AG04450 (cell line): ENCODE measurements at regions of chr7 and their contacts with region 1.

Region 1: DNA sequence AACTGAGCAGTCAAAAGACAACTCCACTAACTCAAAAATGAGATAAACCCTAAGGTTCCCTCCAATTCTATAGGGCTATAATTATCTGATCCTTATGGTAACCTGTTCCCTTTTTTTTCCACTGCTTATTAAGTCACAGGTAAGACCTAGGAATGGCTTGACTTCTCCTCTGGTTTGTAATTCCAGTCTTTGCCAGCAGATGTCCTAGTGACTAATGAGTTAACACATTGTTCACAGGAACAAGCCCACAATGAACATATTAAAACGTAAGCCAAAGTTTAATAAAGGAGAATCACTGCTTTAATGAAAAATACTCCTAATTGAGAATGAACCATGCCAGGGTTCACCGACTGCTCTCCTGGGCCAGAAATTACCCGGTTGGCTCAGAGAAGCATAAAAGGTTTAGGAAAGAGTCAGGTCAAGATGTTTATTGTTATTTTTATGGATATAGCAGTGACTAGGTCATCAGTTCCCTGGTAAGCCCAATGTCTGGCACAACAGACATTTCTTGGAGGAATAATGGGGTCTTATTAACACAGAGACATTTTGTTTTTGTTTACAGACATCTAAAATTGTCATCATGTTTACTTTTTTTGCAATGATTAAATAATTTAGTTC is 120.1 kb downstream of the ELAPOR2 start:
- DNase-seq: peak; percentile 20
- H3K4me3 ChIP-seq: no peak overlapping the region
- H3K27ac ChIP-seq: no peak overlapping the region
- H3K27me3 ChIP-seq: no peaks in the 10 kb centered on the region
- CTCF ChIP-seq: peak; percentile 73

Region 2: DNA sequence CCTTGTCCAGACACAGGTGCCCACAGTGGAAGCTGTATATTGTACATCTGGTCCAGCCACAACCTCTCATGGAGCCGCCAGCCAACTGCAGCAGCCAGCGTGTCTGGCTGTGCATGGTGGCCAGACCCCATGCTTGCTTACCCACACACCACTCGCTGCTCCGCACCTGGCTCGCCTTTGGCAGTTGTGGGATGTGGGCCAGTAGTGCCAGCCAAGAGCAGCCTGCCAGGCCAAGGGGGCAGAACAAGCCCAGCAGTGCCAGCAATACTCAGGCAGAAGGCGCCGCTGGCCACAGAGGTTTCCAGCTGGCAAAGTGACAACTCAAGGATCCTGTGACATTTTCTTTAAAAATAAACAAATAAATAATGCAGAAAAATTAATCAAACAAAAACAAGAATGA is 291.9 kb after region 1 on chr7:
- CTCF ChIA-PET with region 1: interaction called, 11 read pairs
- POLR2A ChIA-PET with region 1: no interaction called
- DNase-seq: no peak
- H3K4me3 ChIP-seq: no peak overlapping the region
- H3K27ac ChIP-seq: no peak overlapping the region
- H3K27me3 ChIP-seq: peaks cover 9% of the 10 kb centered on the region
- CTCF ChIP-seq: no peak